GM10248 (cell line): ENCODE measurements at regions of chr1 and their contacts with region 1.

Region 1: GRCh38 chr1:59143133-59143487 is 153.8 kb upstream of the FGGY start:
- DNase-seq: peak; percentile 34
- CTCF ChIP-seq: no peak

Region 2: DNA sequence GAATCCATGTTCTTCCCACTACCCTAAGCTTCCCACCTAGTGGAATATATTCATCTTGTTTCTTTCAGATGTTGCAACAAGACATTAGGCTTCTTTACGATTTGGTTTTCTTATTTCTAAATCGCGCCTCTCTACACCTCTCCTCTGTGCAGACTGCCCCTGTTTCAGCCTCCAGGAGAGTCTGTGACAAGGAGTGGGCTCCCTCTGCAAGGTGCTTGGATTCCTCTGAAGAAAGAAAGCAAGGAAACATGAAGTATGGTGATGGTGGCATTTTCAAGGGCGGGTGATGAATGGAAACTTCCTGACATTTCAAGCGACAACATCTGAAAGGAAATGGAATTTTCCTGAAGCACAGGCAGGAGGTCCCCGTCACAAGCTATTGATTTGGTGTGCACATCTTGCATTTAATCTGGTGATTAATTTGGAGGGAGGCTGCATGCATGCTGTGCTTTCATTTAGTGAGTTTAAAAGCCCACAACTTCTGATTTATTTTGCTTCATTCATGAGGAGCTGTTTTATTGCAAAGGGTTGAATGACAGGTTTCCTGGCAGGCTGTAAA is 10.8 kb before region 1 on chr1:
- CTCF ChIA-PET with region 1: interaction called, 10 read pairs
- POLR2A ChIA-PET with region 1: no interaction called
- DNase-seq: no peak
- CTCF ChIP-seq: no peak

Region 3: GRCh38 chr1:59296358-59297256 is 153.5 kb after region 1 on chr1 and contains the start of gene FGGY:
- CTCF ChIA-PET with region 1: no interaction called
- POLR2A ChIA-PET with region 1: no interaction called
- DNase-seq: peak; percentile 94
- CTCF ChIP-seq: no peak